Activated CD4-positive, alpha-beta T cell treated with anti-CD3 and anti-CD28 coated beads, Interleukin-2, amount 10 ng/mL, durations not matched to agents 7 days and 5 days (primary cell): ENCODE measurements at regions of chr6 and their contacts with region 1.

Region 1: GRCh38 chr6:13778028-13778427 is 36.3 kb downstream of the MCUR1 start:
- DNase-seq: no peak
- H3K4me3 Mint-ChIP-seq: no peak overlapping the region
- H3K27ac Mint-ChIP-seq: no peak overlapping the region
- H3K4me1 Mint-ChIP-seq: no peaks in the 10 kb centered on the region
- H3K27me3 Mint-ChIP-seq: no peaks in the 10 kb centered on the region

Region 2: DNA sequence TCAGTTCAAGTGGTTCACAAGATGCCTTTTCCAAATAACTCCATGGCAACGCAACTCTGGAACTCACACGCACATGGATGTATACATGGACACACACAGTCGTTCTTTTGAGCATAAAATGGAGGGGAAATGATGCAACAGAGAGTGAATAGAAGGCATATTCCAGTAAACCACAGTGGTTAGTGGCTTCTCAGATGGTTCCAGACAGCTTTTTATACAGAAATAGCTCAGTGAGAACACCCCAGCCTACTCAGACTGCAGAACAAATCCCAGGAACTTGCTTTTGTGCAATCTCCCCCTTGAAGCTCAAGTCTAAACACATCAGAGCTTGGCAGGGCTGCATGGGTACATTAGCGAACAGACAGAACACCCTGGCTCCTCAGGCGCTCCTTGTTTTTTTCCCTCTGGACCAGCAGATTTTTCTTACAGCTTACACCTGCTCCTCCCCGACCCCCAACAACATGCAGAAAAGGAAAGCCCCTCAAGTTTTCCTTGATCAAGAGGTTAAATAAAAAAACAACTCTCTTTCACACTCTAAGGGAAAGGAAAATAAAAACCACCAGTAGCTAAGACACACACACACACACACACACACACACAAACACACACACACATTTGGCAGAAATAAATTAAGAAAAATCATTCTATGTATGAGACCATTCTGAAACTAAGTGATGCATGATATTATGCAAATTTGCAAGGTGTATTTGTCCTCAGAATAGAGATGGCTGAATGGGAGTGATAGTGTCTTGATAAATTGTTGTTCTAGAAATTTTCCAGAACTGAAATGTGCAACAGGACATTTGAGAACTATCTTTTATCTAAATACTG is 15.2 kb before region 1 on chr6:
- CTCF ChIA-PET with region 1: interaction called, 12 read pairs
- POLR2A ChIA-PET with region 1: no interaction called
- DNase-seq: peak; percentile 55
- H3K4me3 Mint-ChIP-seq: peak overlapping the region; percentile 50
- H3K27ac Mint-ChIP-seq: peak overlapping the region; percentile 88
- H3K4me1 Mint-ChIP-seq: peaks cover 51% of the 10 kb centered on the region
- H3K27me3 Mint-ChIP-seq: peaks cover 4% of the 10 kb centered on the region

Region 3: DNA sequence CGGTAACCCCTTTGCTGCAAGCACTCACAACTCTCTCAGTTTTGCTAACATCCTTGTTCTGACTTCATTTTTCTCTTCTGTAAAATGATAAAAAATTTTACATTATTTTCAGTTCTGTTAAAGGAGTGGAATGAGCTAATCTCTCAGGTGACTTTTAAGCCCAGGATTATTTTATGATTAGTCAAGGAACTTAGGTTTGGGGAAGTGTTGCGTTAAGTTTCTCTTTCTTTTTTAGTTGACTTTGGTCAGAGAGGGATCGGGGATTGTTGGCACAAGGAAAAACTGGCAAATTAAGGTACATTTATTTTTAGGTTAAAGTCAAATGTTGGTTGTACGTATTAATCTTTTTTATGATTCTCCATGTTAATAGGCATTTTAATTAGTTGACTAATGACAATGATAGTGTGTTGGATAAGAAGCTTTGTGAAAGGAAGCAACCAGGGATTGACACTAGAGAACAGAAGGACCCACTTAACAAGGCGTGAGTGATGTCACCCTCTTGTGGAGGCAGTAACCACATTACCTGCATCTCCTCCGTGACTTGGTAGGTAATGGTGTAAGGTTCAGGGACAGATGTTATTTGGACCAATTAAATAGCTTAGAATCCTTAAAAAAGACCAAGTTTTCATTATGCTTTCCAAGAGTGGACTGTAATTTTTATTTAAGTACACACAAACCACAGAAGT is 371.2 kb after region 1 on chr6:
- CTCF ChIA-PET with region 1: no interaction called
- POLR2A ChIA-PET with region 1: no interaction called
- DNase-seq: no peak
- H3K4me3 Mint-ChIP-seq: no peak overlapping the region
- H3K27ac Mint-ChIP-seq: no peak overlapping the region
- H3K4me1 Mint-ChIP-seq: peaks cover 9% of the 10 kb centered on the region
- H3K27me3 Mint-ChIP-seq: no peaks in the 10 kb centered on the region